ENCODE measurements at regions of chr7 and their contacts with region 1.

Region 1: GRCh38 chr7:66844552-66845378 is 76.3 kb upstream of the TMEM248 start:
- DNase-seq: peak; percentile 100
- ATAC-seq: peak; percentile 86 to 98 (median 90)
- H3K4me3 ChIP-seq: peak overlapping the region; percentile 86
- H3K4me3 Mint-ChIP-seq: peak overlapping the region; percentile 93
- H3K27ac ChIP-seq: peak overlapping the region; percentile 98
- H3K27ac Mint-ChIP-seq: peak overlapping the region; percentile 94 to 100
- H3K4me1 ChIP-seq: peaks cover 28% of the 10 kb centered on the region
- H3K4me1 Mint-ChIP-seq: peaks cover 24 to 30% of the 10 kb centered on the region in 2 donors
- H3K27me3 ChIP-seq: no peaks in the 10 kb centered on the region
- H3K27me3 Mint-ChIP-seq: peaks cover 0 to 4% of the 10 kb centered on the region in 2 donors
- CTCF ChIP-seq: peak; percentile 23

Region 2: GRCh38 chr7:66740302-66740979 is 104.3 kb before region 1 on chr7 and contains the start of gene RABGEF1:
- intact Hi-C with region 1: loop called (anchors 1 kb)
- DNase-seq: peak; percentile 96 to 99
- ATAC-seq: peak; percentile 86 to 97 (median 88)
- H3K4me3 ChIP-seq: peak within 1 kb of the TSS; percentile 97
- H3K4me3 Mint-ChIP-seq: peak within 1 kb of the TSS; percentile 95
- H3K27ac ChIP-seq: peak within 1 kb of the TSS; percentile 98
- H3K27ac Mint-ChIP-seq: peak within 1 kb of the TSS; percentile 98
- H3K4me1 ChIP-seq: peaks cover 31% of the 10 kb centered on the region
- H3K4me1 Mint-ChIP-seq: peaks cover 38 to 41% of the 10 kb centered on the region in 2 donors
- H3K27me3 ChIP-seq: no peaks in the 10 kb centered on the region
- H3K27me3 Mint-ChIP-seq: no peaks in the 10 kb centered on the region
- CTCF ChIP-seq: no peak
- total RNA-seq, gene RABGEF1: 26.1 to 38.1 (median 31.7) TPM

Region 3: GRCh38 chr7:66920769-66921395 is 76.1 kb after region 1 on chr7 and contains the start of gene TMEM248:
- intact Hi-C with region 1: loop called (anchors 2 kb)
- DNase-seq: peak; percentile 90 to 95
- ATAC-seq: peak; percentile 90 to 94 (median 93)
- H3K4me3 ChIP-seq: peak within 1 kb of the TSS; percentile 65
- H3K4me3 Mint-ChIP-seq: peak within 1 kb of the TSS; percentile 96
- H3K27ac ChIP-seq: peak within 1 kb of the TSS; percentile 86
- H3K27ac Mint-ChIP-seq: peak within 1 kb of the TSS; percentile 97
- H3K4me1 ChIP-seq: peaks cover 27% of the 10 kb centered on the region
- H3K4me1 Mint-ChIP-seq: peaks cover 23 to 24% of the 10 kb centered on the region in 2 donors
- H3K27me3 ChIP-seq: no peaks in the 10 kb centered on the region
- H3K27me3 Mint-ChIP-seq: no peaks in the 10 kb centered on the region
- CTCF ChIP-seq: no peak
- total RNA-seq, gene TMEM248: 97.3 to 105 (median 103) TPM